ENCODE measurements at regions of chr11 and their contacts with region 1.

Region 1: DNA sequence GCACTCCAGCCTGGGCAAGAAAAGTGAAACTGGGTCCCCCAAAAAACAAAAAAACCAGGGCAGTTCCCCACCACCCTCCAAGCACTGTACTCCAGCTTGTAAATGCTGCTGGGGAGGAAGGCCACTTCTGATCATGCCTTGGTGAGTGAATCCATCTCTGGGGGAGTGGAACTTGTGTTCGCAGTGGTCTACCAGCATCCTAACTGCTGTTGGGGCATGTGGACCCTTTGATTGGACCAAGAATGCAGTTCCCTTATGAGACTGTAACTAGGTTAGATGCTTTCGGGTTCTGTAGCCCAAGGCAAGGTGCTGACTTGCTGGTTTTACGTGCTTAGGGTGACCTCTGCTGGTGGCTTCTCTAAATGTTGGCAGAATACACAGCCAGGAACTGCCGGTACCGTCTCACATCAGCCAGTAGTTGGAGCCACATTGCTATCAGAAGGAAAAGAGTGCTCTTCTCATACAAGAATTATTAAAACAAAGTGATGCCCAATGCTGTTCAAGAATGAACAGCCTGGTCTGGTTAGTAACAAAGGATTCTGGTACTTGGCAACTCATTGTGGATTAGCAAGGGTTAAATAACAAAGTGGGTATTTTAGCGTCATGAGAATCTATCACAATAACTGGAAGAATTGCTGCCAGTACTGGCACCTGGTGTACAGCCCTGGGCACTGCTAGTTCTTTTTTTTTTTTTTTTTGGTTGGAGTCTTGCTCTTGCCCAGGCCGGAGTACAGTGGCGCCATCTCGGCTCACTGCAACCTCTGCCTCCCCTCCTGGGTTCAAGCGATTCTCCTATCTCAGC is 13.0 kb downstream of the EIF1AD start:
- DNase-seq: peak; percentile 85
- H3K4me3 ChIP-seq: peak overlapping the region in 1 of 2 experiments; percentile 4; a peak in 1 of 4 replicates
- H3K27ac ChIP-seq: peak overlapping the region; percentile 17 to 18; a peak in 2 of 4 replicates
- H3K4me1 ChIP-seq: peaks cover 0 to 2% of the 10 kb centered on the region in 2 experiments; a peak in 1 of 4 replicates
- H3K27me3 ChIP-seq: no peaks in the 10 kb centered on the region
- CTCF ChIP-seq: peak; percentile 100
- EP300 ChIP-seq: no peak
- RAD21 ChIP-seq: peak; percentile 97

Region 2: DNA sequence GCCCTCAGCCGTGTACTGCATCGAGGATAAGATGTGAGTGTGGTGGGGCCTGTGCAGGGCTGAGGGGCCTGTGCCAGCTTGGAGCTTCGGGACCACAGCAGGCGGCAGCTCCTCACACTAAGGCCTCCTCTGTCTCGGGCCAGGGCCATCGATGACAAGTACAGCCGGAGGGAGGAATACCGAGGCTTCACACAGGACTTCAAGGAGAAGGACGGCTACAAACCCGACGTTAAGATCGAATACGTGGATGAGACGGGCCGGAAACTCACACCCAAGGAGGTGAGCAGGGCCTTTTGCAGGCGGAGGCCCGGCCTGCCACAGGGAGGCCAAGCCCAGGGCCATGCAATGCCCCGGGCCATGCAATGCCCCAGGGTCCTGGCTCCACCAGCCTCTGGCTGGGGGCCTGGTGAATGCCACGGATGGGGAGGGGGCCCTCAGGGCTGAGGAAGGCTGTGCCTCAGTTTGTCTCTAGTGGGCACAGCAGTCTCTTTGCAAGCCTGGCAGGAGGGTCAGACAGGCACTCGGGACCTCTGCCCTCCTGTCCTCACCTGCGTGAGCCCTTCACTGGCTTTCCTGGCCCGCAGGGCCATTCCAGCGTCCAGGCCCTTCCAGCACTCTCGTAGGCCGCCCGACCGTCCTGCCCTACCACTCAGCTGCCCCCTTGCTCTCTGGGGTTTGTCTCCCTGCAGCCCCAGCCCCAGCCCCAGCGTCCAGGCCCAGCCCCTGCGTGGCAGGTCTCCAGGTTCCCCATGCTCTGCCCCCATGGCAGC is 11.2 kb before region 1 on chr11:
- CTCF ChIA-PET with region 1: interaction called, 21 read pairs
- POLR2A ChIA-PET with region 1: no interaction called
- DNase-seq: peak; percentile 12
- H3K4me3 ChIP-seq: no peak overlapping the region
- H3K27ac ChIP-seq: no peak overlapping the region
- H3K4me1 ChIP-seq: no peaks in the 10 kb centered on the region
- H3K27me3 ChIP-seq: no peaks in the 10 kb centered on the region
- CTCF ChIP-seq: no peak
- EP300 ChIP-seq: no peak
- RAD21 ChIP-seq: no peak

Region 3: DNA sequence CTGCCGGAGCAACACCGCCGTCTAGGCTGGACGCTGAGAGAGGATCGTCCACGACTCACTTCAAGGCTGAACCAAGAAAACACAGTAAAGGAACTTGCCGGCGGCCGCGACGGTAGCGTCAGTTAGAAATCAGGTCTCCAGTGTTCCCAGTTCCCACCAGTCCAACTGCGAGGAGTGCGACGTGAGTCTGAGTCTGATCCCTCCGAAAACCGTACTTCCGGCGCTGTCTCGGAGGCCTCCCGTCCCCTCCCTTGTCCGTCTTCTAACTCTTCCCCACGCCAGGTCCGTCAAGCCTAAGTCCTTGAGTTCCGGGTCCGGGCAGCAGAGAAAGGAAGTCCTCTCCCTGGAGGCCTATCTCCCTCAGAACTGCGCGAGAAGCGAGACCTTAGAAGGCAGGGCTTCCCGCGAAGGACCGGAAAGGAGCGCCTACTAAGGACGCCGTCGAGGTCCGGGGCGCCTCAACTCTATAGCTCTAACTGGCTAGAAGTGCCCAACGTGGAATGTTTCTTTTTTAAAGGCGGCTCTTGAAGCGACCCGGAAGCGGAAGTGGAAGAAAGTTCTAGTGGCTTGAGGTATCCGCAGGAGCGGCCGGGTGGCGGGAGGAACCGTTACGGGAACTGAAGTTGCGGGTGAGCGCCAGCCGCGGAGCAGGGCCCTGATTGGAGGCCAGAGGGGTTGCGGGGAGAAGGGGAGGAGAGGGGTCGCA is 13.1 kb after region 1 on chr11 and contains the starts of genes BANF1 and EIF1AD:
- CTCF ChIA-PET with region 1: interaction called, 15 read pairs
- POLR2A ChIA-PET with region 1: no interaction called
- DNase-seq: peak; percentile 90
- H3K4me3 ChIP-seq: peak within 1 kb of the TSS; percentile 95 to 99
- H3K27ac ChIP-seq: peak within 1 kb of the TSS; percentile 98
- H3K4me1 ChIP-seq: peaks cover 6 to 11% of the 10 kb centered on the region in 2 experiments; a peak in 3 of 4 replicates
- H3K27me3 ChIP-seq: no peaks in the 10 kb centered on the region
- CTCF ChIP-seq: no peak
- EP300 ChIP-seq: peak; percentile 2 to 42; a peak in 1 of 4 replicates
- RAD21 ChIP-seq: no peak
- polyA plus RNA-seq, gene BANF1: 311 and 382 TPM in 2 replicates
- polyA plus RNA-seq, gene EIF1AD: 28.9 and 31.4 TPM in 2 replicates

Region 4: DNA sequence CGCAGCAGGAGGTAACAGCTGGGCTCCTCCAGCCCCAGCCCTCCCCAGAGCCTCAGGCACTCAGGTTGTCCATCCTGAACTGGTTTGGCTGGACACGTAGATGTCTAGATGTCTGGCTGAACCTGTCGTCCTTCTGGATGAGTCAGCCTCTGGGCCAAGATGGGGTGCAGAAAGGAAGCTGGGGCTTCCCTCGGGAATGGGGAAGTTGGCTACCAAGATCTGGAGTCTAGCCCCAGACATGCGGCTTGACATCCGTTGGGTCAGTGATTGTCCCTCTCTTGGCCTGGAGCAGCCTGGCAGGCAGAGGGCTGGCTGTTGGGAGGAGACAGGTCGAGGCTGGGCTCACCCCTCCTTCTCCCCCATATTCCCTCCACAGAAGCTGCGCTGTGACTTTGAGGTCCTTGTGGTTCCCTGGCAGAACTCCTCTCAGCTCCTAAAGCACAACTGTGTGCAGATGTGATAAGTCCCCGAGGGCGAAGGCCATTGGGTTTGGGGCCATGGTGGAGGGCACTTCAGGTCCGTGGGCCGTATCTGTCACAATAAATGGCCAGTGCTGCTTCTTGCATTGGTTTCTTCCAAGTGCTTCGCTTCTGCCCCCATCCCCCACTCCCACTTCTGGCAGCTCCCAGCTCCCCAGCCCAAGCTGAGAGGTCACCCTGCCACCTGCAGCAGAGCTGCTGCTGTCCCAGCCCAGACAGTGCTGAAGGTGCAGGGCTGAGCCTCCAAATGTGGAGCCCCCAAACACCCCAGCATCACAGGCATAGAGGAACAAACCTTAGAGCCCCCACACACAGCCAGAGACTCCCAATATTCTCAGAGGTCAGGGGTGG is 24.2 kb after region 1 on chr11:
- CTCF ChIA-PET with region 1: no interaction called
- POLR2A ChIA-PET with region 1: no interaction called
- DNase-seq: no peak
- H3K4me3 ChIP-seq: no peak overlapping the region
- H3K27ac ChIP-seq: 0 out of 4 replicates have a peak overlapping the region, but pooled peaks of 1 of the 2 experiments have one; percentile 92
- H3K4me1 ChIP-seq: peaks cover 15 to 29% of the 10 kb centered on the region in 2 experiments; a peak in 3 of 4 replicates
- H3K27me3 ChIP-seq: no peaks in the 10 kb centered on the region
- CTCF ChIP-seq: no peak
- EP300 ChIP-seq: no peak
- RAD21 ChIP-seq: no peak

Region 5: DNA sequence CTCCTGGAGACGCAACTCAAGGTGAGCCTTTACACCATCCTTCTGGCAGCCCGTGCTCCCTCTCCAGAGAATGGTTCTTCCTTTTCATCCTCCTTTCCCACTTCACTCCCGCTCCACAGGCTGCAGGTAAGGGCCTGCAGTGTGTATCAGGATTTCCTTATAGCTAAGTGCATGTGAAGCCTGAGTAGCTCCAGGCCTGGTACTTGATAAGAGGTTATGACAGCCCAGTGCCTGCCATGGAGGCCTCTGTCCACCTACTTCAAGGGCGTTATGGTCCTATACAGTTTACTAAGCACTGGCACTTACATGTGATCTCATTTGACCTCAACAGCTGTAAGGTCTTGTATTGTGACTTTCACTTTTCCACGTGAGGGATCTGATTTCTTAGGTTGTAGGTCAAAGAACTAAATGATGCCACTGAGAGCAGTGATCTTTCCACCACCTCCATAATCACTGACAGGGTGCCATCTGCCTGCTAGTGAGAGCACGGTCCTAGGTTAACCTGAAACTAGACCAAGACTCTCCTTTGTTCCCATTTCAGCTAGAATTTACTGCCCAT is 1332.4 kb after region 1 on chr11:
- CTCF ChIA-PET with region 1: no interaction called
- POLR2A ChIA-PET with region 1: no interaction called
- DNase-seq: no peak
- H3K4me3 ChIP-seq: no peak overlapping the region
- H3K27ac ChIP-seq: no peak overlapping the region
- H3K4me1 ChIP-seq: peaks cover 4 to 8% of the 10 kb centered on the region in 2 experiments; a peak in 1 of 4 replicates
- H3K27me3 ChIP-seq: no peaks in the 10 kb centered on the region
- CTCF ChIP-seq: no peak
- EP300 ChIP-seq: no peak
- RAD21 ChIP-seq: no peak

Measured in SK-N-SH (cell line).